ENCODE measurements at regions of chr12 and their contacts with region 1.

Region 1: DNA sequence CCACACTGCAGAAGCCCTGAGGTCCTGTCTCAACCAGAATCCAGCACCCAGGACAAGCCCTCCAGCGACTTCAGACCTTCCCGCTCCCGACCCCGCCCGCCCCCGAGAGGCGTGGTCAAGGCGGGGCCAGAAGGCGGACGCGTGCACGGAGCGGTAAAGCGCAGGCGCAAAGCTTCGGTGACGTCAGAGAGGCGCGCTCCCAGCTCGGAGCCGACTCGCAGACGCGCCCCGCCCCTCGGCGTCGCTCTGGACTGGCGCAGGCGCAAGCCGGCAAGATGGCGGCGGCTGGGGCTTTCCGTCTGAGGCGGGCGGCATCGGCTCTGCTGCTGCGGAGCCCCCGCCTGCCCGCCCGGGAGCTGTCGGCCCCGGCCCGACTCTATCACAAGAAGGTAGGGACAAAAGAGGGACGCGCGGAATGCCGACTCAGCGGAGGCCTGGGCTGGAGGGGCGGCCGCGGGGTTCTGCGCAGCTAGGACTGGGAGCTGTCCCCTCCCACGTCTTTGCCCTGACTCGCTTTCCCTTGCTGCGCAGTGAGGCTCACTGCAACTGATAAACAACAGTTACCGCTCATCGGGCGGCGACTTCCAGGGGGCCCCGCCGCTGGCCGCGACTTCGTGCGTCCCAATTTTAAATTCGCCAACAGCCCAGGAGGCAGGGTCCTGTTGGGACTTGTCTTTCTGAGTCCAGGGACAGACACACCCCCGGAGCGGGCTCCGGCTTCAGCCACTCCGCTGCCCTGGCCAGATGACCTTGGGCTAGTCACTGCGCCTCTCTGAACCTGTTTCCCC is at the start of gene ISCU:
- DNase-seq: peak; percentile 97 to 100 (median 99)
- ATAC-seq: peak; percentile 63
- H3K4me3 ChIP-seq: peak within 1 kb of the TSS; percentile 97
- H3K4me3 Mint-ChIP-seq: peak within 1 kb of the TSS; percentile 99
- H3K27ac ChIP-seq: peak within 1 kb of the TSS; percentile 92 to 94
- H3K27ac Mint-ChIP-seq: peak within 1 kb of the TSS; percentile 96
- H3K4me1 ChIP-seq: peaks cover 63% of the 10 kb centered on the region
- H3K4me1 Mint-ChIP-seq: peaks cover 74% of the 10 kb centered on the region
- H3K27me3 ChIP-seq: no peaks in the 10 kb centered on the region
- H3K27me3 Mint-ChIP-seq: no peaks in the 10 kb centered on the region
- CTCF ChIP-seq: no peak
- total RNA-seq, gene ISCU: 269 to 270 TPM

Region 2: GRCh38 chr12:108548954-108549521 is 13.5 kb before region 1 on chr12:
- CTCF ChIA-PET with region 1: no interaction called
- POLR2A ChIA-PET with region 1: interaction called, 10 read pairs
- intact Hi-C with region 1: no loop called
- DNase-seq: no peak
- ATAC-seq: no peak
- H3K4me3 ChIP-seq: no peak overlapping the region
- H3K4me3 Mint-ChIP-seq: no peak overlapping the region
- H3K27ac ChIP-seq: no peak overlapping the region
- H3K27ac Mint-ChIP-seq: no peak overlapping the region
- H3K4me1 ChIP-seq: peaks cover 10% of the 10 kb centered on the region
- H3K4me1 Mint-ChIP-seq: peaks cover 56% of the 10 kb centered on the region
- H3K27me3 ChIP-seq: no peaks in the 10 kb centered on the region
- H3K27me3 Mint-ChIP-seq: no peaks in the 10 kb centered on the region
- CTCF ChIP-seq: no peak

Region 3: GRCh38 chr12:108582978-108583770 is 20.6 kb after region 1 on chr12:
- CTCF ChIA-PET with region 1: no interaction called
- POLR2A ChIA-PET with region 1: no interaction called
- intact Hi-C with region 1: no loop called
- DNase-seq: no peak
- ATAC-seq: no peak
- H3K4me3 ChIP-seq: no peak overlapping the region
- H3K4me3 Mint-ChIP-seq: no peak overlapping the region
- H3K27ac ChIP-seq: no peak overlapping the region
- H3K27ac Mint-ChIP-seq: no peak overlapping the region
- H3K4me1 ChIP-seq: no peaks in the 10 kb centered on the region
- H3K4me1 Mint-ChIP-seq: no peaks in the 10 kb centered on the region
- H3K27me3 ChIP-seq: no peaks in the 10 kb centered on the region
- H3K27me3 Mint-ChIP-seq: no peaks in the 10 kb centered on the region
- CTCF ChIP-seq: no peak

Region 4: GRCh38 chr12:108633534-108634248 is 71.1 kb after region 1 on chr12 and contains the start of gene SELPLG:
- CTCF ChIA-PET with region 1: interaction called, 10 read pairs
- POLR2A ChIA-PET with region 1: interaction called, 164 read pairs
- intact Hi-C with region 1: loop called (anchors 1 kb)
- DNase-seq: peak; percentile 76 to 97 (median 84)
- ATAC-seq: peak; percentile 69
- H3K4me3 ChIP-seq: peak within 1 kb of the TSS; percentile 87
- H3K4me3 Mint-ChIP-seq: peak within 1 kb of the TSS; percentile 98
- H3K27ac ChIP-seq: peak within 1 kb of the TSS; percentile 86 to 95
- H3K27ac Mint-ChIP-seq: peak within 1 kb of the TSS; percentile 100
- H3K4me1 ChIP-seq: peaks cover 69% of the 10 kb centered on the region
- H3K4me1 Mint-ChIP-seq: peaks cover 73% of the 10 kb centered on the region
- H3K27me3 ChIP-seq: no peaks in the 10 kb centered on the region
- H3K27me3 Mint-ChIP-seq: no peaks in the 10 kb centered on the region
- CTCF ChIP-seq: no peak
- total RNA-seq, gene SELPLG: 25.7 to 27.8 TPM

Region 5: DNA sequence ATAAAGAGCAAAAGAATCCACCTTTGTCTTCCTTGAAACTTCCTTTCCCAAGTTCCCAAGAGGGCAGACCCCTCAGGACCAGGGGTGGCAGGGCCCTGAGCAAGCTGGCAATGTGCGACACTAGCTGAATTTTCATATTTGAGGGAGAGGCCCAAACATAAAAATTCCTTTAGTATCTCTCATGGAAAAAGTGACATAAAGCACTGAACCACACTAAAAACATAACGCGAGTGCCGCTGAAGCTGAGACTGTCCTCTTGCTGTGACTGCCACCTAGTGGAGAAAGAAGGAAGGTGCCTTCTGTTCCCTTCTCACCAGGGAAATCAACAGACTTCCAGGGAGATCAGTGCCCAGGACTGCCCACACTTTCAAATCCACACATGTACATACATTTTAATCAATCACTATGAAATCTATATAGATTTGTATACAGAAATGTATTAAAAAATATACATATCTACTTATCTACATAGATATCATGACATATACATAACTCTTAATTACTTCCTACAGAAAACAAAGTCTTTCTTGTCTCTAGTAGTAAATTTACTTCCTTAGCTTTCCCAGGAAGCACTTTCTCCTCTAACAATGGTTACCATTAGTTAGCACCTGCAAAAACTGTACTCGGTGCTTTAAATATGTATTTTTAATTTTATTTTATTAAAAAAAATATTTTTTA is 241.0 kb after region 1 on chr12:
- CTCF ChIA-PET with region 1: interaction called, 16 read pairs
- POLR2A ChIA-PET with region 1: interaction called, 5 read pairs
- intact Hi-C with region 1: loop called (anchors 1 kb)
- DNase-seq: peak; percentile 39 to 87 (median 58)
- ATAC-seq: peak; percentile 96
- H3K4me3 ChIP-seq: no peak overlapping the region
- H3K4me3 Mint-ChIP-seq: no peak overlapping the region
- H3K27ac ChIP-seq: no peak overlapping the region
- H3K27ac Mint-ChIP-seq: no peak overlapping the region
- H3K4me1 ChIP-seq: peaks cover 4% of the 10 kb centered on the region
- H3K4me1 Mint-ChIP-seq: peaks cover 4% of the 10 kb centered on the region
- H3K27me3 ChIP-seq: no peaks in the 10 kb centered on the region
- H3K27me3 Mint-ChIP-seq: no peaks in the 10 kb centered on the region
- CTCF ChIP-seq: peak; percentile 94

Region 6: DNA sequence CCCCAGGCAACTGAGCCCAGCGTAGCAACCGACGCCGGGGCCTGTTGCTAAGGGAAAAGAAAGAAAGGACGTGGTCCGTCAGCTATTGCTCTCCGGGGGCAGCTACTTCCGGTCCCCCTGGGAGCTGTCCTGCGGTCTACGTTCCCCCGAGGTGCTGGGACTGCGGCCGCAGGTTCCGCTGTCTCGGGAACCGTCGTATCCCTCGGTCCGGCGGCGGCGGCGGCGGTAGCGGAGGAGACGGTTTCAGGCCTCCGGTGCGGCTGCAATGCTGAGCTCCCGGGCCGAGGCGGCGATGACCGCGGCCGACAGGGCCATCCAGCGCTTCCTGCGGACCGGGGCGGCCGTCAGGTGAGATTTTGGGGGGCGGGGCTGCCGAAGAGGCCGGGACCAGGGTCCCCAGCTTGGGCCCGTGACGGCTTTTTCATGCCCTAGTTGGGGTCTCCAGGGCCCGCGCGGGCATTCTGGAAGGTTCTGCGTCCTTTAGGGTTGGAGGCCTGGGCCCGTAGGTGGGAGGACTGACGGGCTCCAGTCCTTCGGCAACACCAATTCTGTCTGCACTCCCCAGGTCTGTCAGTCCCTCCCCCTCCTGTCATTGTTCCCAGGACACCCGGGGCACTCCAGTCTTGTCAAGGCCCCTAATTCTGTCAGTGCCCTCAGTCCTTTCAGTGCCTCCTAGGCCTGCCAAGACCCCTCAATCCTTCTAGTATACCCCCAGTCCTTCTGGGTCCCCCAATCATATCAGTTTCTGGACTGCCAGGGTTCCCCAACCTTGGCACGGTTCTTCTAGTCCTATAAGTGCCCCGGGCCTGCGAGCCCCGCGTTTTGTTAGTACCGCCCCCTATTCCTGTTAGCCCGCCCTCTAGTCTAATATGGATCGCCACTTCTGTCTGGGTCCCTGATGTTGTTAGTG is 490.1 kb after region 1 on chr12 and contains the start of gene USP30:
- CTCF ChIA-PET with region 1: no interaction called
- POLR2A ChIA-PET with region 1: interaction called, 7 read pairs
- intact Hi-C with region 1: loop called (anchors 2 to 5 kb)
- DNase-seq: peak; percentile 75 to 93 (median 81)
- ATAC-seq: peak; percentile 77
- H3K4me3 ChIP-seq: peak within 1 kb of the TSS; percentile 92
- H3K4me3 Mint-ChIP-seq: peak within 1 kb of the TSS; percentile 98
- H3K27ac ChIP-seq: peak within 1 kb of the TSS; percentile 87
- H3K27ac Mint-ChIP-seq: peak within 1 kb of the TSS; percentile 86
- H3K4me1 ChIP-seq: peaks cover 23% of the 10 kb centered on the region
- H3K4me1 Mint-ChIP-seq: peaks cover 13% of the 10 kb centered on the region
- H3K27me3 ChIP-seq: no peaks in the 10 kb centered on the region
- H3K27me3 Mint-ChIP-seq: no peaks in the 10 kb centered on the region
- CTCF ChIP-seq: no peak
- total RNA-seq, gene USP30: 21.8 to 23.0 TPM

Measured in CD4-positive, alpha-beta T cell (primary cell).